GM10248 (cell line): ENCODE measurements at regions of chr11 and their contacts with region 1.

Region 1: GRCh38 chr11:46392421-46393230 is 1.1 kb upstream of the CHRM4 start:
- DNase-seq: peak; percentile 95
- CTCF ChIP-seq: no peak

Region 2: GRCh38 chr11:46352063-46352841 is 40.4 kb before region 1 on chr11:
- CTCF ChIA-PET with region 1: interaction called, 27 read pairs
- POLR2A ChIA-PET with region 1: interaction called, 3 read pairs
- DNase-seq: peak; percentile 69
- CTCF ChIP-seq: peak; percentile 87

Region 3: GRCh38 chr11:46404476-46405017 is 11.9 kb after region 1 on chr11:
- CTCF ChIA-PET with region 1: interaction called, 42 read pairs
- POLR2A ChIA-PET with region 1: no interaction called
- DNase-seq: no peak
- CTCF ChIP-seq: no peak

Region 4: DNA sequence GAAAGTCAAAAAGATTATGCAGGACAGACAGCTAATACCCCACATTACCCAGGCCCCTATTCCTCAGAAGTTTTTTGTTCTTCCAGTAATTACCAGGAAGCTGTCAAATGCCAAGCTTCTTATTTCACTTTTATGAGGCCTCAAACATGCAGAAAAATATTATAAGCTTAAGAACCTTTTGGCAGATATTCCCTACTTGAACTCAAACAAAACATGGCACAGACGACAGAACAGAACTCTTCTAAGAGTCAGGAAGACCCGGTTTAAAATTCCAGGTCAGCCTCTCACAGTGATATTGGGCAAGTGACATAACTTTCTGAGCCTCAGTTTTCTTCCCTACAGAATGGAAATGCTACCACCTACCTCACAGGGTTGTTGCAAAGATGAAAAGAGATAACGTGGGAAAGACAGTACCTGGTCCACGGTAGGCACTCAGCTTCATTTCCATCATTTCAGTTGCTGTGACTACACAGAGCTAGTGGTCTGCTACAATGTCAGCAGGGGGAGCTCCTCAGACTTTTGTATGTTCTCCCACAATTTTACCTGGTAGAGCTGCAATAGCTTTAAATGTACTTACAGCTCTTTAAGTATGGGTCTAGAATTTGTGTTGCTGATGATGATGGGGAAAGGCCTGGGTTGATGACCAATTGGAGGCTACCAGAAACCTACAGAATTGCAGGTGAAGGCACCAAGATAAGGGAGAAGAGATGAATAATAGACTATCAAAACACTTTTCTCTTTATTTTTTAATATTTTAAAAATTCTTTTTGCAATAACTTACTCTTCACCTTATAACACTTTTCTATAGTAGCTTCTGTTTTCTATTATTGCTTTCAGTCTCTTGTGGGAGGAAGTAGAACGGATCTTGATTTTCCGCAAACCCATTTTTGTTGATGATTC is 97.3 kb after region 1 on chr11:
- CTCF ChIA-PET with region 1: interaction called, 13 read pairs
- POLR2A ChIA-PET with region 1: no interaction called
- DNase-seq: peak; percentile 55
- CTCF ChIP-seq: peak; percentile 68

Region 5: DNA sequence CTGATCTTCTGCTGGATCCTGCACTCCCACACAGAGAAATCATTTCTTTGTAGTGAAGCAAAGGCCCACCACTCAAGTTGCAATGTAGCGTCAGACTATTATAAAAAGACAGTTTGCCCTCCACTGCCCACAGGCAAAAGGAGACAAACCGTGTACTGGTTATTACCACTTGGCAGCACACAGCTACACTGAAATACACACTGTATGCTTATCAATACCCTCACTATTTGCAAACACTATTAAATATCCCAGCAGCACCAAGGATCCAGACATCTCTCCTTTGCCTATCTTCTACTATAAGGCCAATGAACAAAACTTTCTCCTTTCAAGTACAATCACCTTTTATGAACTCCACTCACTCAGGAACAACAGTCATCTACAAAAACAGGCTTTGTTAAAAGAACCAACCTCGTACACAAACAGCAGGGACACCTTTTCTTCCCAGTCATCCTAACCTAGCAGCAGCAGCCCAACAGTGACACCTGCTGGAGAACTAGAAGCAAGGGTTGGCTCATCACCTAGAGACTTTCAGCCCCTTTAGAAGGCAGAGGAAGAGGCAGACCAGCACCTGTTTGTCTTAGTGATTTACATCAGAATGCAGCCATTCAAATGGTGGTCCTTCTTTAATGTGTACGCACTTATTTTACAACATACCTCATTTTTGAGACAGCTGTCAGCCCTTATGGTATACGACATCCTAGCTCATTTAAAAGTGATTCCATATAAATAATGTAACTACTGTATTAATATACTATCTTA is 145.1 kb after region 1 on chr11:
- CTCF ChIA-PET with region 1: interaction called, 83 read pairs
- POLR2A ChIA-PET with region 1: no interaction called
- DNase-seq: peak; percentile 75
- CTCF ChIP-seq: peak; percentile 82

Region 6: DNA sequence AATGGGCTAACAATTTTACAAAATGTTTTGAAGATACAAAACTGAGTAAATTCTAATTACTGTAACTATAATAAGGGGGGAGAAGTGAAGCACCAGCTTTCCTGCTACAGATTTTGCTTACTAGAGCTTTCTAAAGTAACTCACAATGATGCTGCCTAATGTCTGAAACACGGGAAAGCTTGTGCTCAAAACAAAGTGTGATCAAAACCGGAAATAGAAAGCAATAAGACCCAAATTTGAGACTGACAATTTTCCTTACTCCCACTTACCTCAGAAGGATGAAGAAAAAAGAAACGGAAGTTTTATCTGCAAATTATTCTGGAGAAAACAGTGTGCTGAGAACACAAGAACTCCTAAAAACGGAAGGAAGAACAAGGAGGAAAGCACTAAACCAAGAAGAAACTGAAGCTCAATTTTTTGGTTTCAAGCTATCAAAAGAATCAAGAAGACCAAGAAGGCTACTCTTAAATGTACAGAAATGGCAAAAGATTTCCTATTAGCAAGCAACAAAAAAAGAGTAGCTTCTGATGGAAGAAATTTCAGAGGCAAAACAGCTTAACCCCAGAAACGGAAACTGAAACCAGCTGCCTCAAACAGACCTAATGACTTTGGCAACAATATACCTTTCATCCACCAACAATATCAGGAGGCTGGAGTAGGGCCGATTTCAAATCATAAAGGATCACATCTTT is 167.8 kb after region 1 on chr11:
- CTCF ChIA-PET with region 1: interaction called, 18 read pairs
- POLR2A ChIA-PET with region 1: no interaction called
- DNase-seq: peak; percentile 47
- CTCF ChIP-seq: no peak

Region 7: DNA sequence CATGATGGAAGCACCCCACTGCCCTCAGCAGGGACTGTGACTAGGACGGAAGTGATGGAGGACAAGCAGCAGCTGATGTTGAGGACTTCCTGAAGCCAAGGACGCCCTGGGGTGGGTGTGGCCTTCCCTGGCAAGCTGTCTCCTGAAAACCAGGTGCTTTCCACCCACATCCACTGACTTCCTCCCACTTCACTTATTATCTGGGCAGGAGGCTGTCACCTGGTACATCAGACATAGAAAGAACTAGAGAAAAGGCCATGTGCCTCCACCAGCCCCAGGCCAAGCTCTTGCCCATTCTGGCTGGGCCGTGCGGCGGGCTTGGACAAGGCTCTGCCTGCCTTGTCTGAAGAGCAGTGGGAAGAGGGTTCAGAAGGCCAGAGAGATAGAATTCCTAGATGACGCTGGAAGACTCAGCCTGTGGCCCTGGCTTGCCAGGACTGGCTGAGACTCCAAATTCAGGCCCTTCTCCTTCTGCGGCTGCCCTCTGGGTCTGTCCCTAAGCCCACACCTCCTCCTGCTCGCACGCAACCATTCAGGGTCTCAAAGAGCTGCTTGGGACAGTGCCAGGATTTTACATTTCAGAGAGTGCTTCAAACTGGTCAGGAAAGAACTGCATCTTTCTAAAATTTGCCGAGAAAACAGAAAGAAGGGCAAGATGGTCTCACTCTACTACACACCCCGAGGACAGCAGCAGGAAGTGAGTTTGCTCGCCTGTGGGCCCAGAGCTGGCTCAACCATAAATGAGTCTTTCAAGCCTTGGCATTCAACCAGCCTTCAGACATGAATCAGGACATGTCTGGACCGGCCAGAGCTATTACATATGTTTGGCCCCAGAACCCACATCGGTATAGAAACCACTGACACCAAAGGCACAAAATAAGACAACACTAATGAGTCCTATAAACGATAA is 294.5 kb after region 1 on chr11:
- CTCF ChIA-PET with region 1: no interaction called
- POLR2A ChIA-PET with region 1: no interaction called
- DNase-seq: no peak
- CTCF ChIP-seq: no peak